GM10248 (cell line): ENCODE measurements at regions of chr1 and their contacts with region 1.

Region 1: GRCh38 chr1:88061492-88062177 is 622.4 kb upstream of the PKN2 start:
- DNase-seq: peak; percentile 14
- CTCF ChIP-seq: peak; percentile 55

Region 2: GRCh38 chr1:87292684-87293493 is 768.7 kb before region 1 on chr1:
- CTCF ChIA-PET with region 1: interaction called, 11 read pairs
- POLR2A ChIA-PET with region 1: no interaction called
- DNase-seq: peak; percentile 48
- CTCF ChIP-seq: peak; percentile 66

Region 3: DNA sequence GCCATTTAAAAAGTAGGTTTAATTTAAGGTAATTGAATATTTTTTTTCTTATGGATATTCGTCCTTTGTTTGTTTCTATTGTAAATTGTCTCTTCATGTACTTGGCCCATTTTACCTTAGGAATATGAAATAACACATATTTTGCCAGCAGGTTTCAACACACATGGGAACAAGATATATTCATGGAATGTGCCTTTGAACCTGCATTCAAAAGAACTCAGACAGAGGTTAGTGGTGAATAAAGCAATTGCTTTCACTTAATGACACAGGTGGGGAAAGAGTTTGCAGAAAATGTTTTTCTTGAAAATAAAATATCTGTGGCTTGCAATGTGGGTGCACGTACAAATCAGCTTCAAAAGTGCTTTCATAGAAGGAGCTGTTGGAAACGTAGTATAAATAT is 11.1 kb before region 1 on chr1:
- CTCF ChIA-PET with region 1: interaction called, 10 read pairs
- POLR2A ChIA-PET with region 1: no interaction called
- DNase-seq: no peak
- CTCF ChIP-seq: no peak

Region 4: DNA sequence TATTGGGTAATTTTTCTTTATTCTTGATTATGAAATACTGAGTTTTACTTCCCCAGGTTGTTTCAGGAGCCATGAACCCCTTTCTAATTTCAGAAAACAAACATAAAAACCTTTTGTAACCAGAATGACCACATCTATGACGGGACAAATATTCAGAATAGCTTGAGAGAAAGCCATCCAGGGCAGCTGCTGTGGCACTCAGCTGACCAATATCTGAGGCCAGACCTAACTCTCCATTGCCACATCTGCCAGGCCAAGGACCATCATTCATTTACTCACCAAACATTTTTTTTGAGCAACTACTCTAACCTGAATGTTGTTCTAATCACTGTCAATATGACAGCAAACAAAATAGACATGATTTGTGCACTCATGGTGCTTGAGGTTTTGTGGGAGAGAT is 14.2 kb after region 1 on chr1:
- CTCF ChIA-PET with region 1: interaction called, 10 read pairs
- POLR2A ChIA-PET with region 1: no interaction called
- DNase-seq: no peak
- CTCF ChIP-seq: no peak

Region 5: GRCh38 chr1:88134983-88135921 is 73.6 kb after region 1 on chr1:
- CTCF ChIA-PET with region 1: no interaction called
- POLR2A ChIA-PET with region 1: no interaction called
- DNase-seq: no peak
- CTCF ChIP-seq: no peak